ENCODE measurements at regions of chr6 and their contacts with region 1.

Region 1: GRCh38 chr6:145929037-145929633 is 35.0 kb downstream of the SHPRH start:
- DNase-seq: peak in 1 of 4 donors; percentile 23
- ATAC-seq: no peak
- H3K4me3 ChIP-seq: no peak overlapping the region
- H3K27ac ChIP-seq: no peak overlapping the region
- H3K4me1 ChIP-seq: no peaks in the 10 kb centered on the region
- H3K27me3 ChIP-seq: no peaks in the 10 kb centered on the region
- CTCF ChIP-seq: peak; percentile 13 to 73 (median 51)
- POLR2A ChIP-seq: no peak

Region 2: GRCh38 chr6:146357578-146358430 is 428.7 kb after region 1 on chr6:
- intact Hi-C with region 1: no loop called
- DNase-seq: no peak
- ATAC-seq: no peak
- H3K4me3 ChIP-seq: no peak overlapping the region
- H3K27ac ChIP-seq: no peak overlapping the region
- H3K4me1 ChIP-seq: no peaks in the 10 kb centered on the region
- H3K27me3 ChIP-seq: no peaks in the 10 kb centered on the region
- CTCF ChIP-seq: no peak
- POLR2A ChIP-seq: no peak

Region 3: GRCh38 chr6:146700078-146700686 is 771.0 kb after region 1 on chr6:
- intact Hi-C with region 1: loop called (anchors 10 kb)
- DNase-seq: peak; percentile 79 to 89 (median 88)
- ATAC-seq: peak; percentile 88
- H3K4me3 ChIP-seq: no peak overlapping the region
- H3K27ac ChIP-seq: no peak overlapping the region
- H3K4me1 ChIP-seq: no peaks in the 10 kb centered on the region
- H3K27me3 ChIP-seq: no peaks in the 10 kb centered on the region
- CTCF ChIP-seq: peak; percentile 45 to 90 (median 77)
- POLR2A ChIP-seq: no peak